ENCODE measurements at regions of chr3 and their contacts with region 1.

Region 1: DNA sequence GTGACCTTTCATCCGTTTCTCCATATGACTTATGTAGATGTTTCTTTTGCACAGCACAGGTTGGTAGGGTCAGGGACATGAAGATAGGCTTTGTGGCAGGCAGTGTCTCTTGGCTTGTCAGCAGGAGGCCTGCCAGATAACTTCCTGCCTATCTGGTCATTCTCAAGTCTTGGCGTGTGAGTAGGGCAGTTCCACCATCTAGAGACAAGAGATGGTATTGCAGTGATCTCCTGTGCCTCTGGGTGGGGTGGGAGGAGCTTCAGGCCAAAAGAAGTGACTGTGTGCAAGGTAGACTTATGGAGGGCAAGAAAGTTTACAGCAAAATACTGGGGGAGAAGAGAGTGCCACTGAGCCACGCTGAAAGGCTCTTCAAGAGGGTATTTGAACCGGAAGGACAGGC is 11.0 kb downstream of the TEX264 start:
- DNase-seq: peak; percentile 40
- ATAC-seq: peak; percentile 87
- H3K4me3 Mint-ChIP-seq: peak overlapping the region; percentile 12
- H3K27ac Mint-ChIP-seq: peak overlapping the region; percentile 73
- H3K4me1 Mint-ChIP-seq: peaks cover 82% of the 10 kb centered on the region
- H3K27me3 Mint-ChIP-seq: no peaks in the 10 kb centered on the region
- CTCF ChIP-seq: no peak

Region 2: GRCh38 chr3:51384726-51385473 is 297.2 kb before region 1 on chr3 and contains the start of gene MANF:
- CTCF ChIA-PET with region 1: interaction called, 15 read pairs
- POLR2A ChIA-PET with region 1: interaction called, 15 read pairs
- intact Hi-C with region 1: no loop called
- DNase-seq: peak; percentile 89
- ATAC-seq: peak; percentile 95
- H3K4me3 Mint-ChIP-seq: peak within 1 kb of the TSS; percentile 99
- H3K27ac Mint-ChIP-seq: peak within 1 kb of the TSS; percentile 98
- H3K4me1 Mint-ChIP-seq: peaks cover 49% of the 10 kb centered on the region
- H3K27me3 Mint-ChIP-seq: no peaks in the 10 kb centered on the region
- CTCF ChIP-seq: no peak
- total RNA-seq, gene MANF: 64.2 and 66.1 TPM in 2 replicates

Region 3: DNA sequence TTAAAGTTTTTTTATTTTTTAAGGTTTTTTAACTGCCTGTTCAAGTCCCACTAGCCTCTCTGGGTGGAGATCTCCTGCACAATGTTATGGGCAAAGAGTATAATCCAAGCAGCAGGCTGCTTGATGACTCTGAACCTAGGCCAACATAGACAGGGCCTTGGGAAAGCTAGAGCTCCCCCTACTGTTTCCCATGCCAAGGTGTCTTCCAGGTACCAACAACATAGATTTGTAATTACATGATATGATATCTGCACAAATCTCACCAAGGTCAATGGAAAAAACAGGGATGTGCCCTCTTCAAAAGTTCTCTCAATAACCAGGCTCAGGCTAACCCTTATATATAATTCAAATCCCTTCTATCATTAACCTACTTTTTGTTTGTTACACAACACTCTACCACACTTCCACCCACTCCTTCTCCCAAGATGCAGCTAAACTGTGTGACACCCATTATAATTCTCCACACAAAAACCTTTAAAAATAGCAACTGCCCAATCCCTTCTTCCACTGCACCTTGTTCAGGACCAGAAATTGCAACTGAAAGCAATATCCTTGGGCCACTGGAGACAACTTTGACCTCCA is 247.2 kb before region 1 on chr3:
- CTCF ChIA-PET with region 1: interaction called, 4 read pairs
- POLR2A ChIA-PET with region 1: no interaction called
- intact Hi-C with region 1: loop called (anchors 2 kb)
- DNase-seq: no peak
- ATAC-seq: peak; percentile 66
- H3K4me3 Mint-ChIP-seq: no peak overlapping the region
- H3K27ac Mint-ChIP-seq: no peak overlapping the region
- H3K4me1 Mint-ChIP-seq: no peaks in the 10 kb centered on the region
- H3K27me3 Mint-ChIP-seq: no peaks in the 10 kb centered on the region
- CTCF ChIP-seq: no peak

Region 4: GRCh38 chr3:51559411-51559888 is 122.6 kb before region 1 on chr3:
- CTCF ChIA-PET with region 1: no interaction called
- POLR2A ChIA-PET with region 1: no interaction called
- intact Hi-C with region 1: no loop called
- DNase-seq: no peak
- ATAC-seq: no peak
- H3K4me3 Mint-ChIP-seq: no peak overlapping the region
- H3K27ac Mint-ChIP-seq: no peak overlapping the region
- H3K4me1 Mint-ChIP-seq: peaks cover 4% of the 10 kb centered on the region
- H3K27me3 Mint-ChIP-seq: no peaks in the 10 kb centered on the region
- CTCF ChIP-seq: no peak

Region 5: DNA sequence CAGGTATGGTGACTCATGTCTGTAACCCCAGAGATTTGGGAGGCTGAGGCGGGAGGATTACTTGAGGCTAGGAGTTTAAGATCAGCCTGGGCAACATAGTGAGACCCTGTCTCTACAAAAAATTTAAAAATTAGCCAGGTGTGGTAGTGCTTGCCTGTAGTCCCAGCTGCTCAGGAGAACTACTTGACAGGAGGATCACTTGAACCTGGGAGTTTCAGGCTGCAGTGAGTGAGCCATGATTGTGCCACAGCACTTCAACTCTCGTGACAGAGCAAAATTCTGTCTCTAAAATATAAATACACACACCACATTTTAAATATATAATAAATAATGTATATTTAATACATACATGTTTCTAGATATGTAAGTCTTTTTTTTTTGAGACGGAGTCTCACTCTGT is 64.5 kb before region 1 on chr3:
- CTCF ChIA-PET with region 1: no interaction called
- POLR2A ChIA-PET with region 1: no interaction called
- intact Hi-C with region 1: no loop called
- DNase-seq: no peak
- ATAC-seq: no peak
- H3K4me3 Mint-ChIP-seq: no peak overlapping the region
- H3K27ac Mint-ChIP-seq: no peak overlapping the region
- H3K4me1 Mint-ChIP-seq: peaks cover 5% of the 10 kb centered on the region
- H3K27me3 Mint-ChIP-seq: no peaks in the 10 kb centered on the region
- CTCF ChIP-seq: no peak

Region 6: DNA sequence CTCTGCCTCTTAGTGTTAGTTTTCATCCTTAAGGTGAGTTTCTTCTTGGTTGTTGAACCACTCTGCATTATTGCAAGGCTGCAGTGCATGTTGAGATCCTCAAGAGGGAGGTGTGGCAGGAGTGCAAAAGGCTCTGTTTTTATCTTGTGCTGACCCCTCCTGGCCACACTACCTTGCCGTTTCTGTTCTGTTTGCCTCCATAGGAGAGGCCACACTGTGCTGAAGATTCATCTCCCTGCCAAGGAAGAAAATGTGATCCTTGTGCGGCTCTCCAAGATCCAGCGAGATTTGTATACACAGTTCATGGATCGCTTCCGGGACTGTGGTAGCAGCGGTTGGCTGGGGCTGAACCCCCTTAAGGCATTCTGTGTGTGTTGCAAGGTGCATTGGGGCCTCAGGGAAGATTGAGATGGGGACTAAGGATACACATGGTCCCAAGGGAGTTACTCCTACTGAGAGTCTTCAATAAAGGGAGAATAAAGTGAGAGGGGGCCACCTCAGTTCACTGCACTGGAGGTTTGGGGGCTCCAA is 44.1 kb before region 1 on chr3:
- CTCF ChIA-PET with region 1: interaction called, 31 read pairs
- POLR2A ChIA-PET with region 1: no interaction called
- intact Hi-C with region 1: loop called (anchors 1 kb)
- DNase-seq: no peak
- ATAC-seq: peak; percentile 90
- H3K4me3 Mint-ChIP-seq: no peak overlapping the region
- H3K27ac Mint-ChIP-seq: no peak overlapping the region
- H3K4me1 Mint-ChIP-seq: no peaks in the 10 kb centered on the region
- H3K27me3 Mint-ChIP-seq: no peaks in the 10 kb centered on the region
- CTCF ChIP-seq: no peak

Region 7: GRCh38 chr3:51670823-51671733 is 11.0 kb before region 1 on chr3 and contains the start of gene TEX264:
- CTCF ChIA-PET with region 1: interaction called, 78 read pairs
- POLR2A ChIA-PET with region 1: interaction called, 39 read pairs
- intact Hi-C with region 1: loop called (anchors 1 kb)
- DNase-seq: peak; percentile 95
- ATAC-seq: peak; percentile 85
- H3K4me3 Mint-ChIP-seq: peak within 1 kb of the TSS; percentile 89
- H3K27ac Mint-ChIP-seq: peak within 1 kb of the TSS; percentile 89
- H3K4me1 Mint-ChIP-seq: peaks cover 55% of the 10 kb centered on the region
- H3K27me3 Mint-ChIP-seq: no peaks in the 10 kb centered on the region
- CTCF ChIP-seq: no peak
- total RNA-seq, gene TEX264: 24.1 and 24.4 TPM in 2 replicates